ENCODE measurements at regions of chr5 and their contacts with region 1.

Region 1: GRCh38 chr5:138649316-138649720 is 74.1 kb upstream of the HSPA9 start:
- DNase-seq: no peak
- H3K4me3 Mint-ChIP-seq: no peak overlapping the region
- H3K27ac Mint-ChIP-seq: no peak overlapping the region
- H3K4me1 Mint-ChIP-seq: no peaks in the 10 kb centered on the region
- H3K27me3 Mint-ChIP-seq: no peaks in the 10 kb centered on the region
- CTCF ChIP-seq: no peak

Region 2: GRCh38 chr5:138594305-138595058 is 54.8 kb before region 1 on chr5:
- CTCF ChIA-PET with region 1: interaction called, 14 read pairs
- POLR2A ChIA-PET with region 1: no interaction called
- intact Hi-C with region 1: no loop called
- DNase-seq: no peak
- H3K4me3 Mint-ChIP-seq: no peak overlapping the region
- H3K27ac Mint-ChIP-seq: no peak overlapping the region
- H3K4me1 Mint-ChIP-seq: peaks cover 6% of the 10 kb centered on the region
- H3K27me3 Mint-ChIP-seq: no peaks in the 10 kb centered on the region
- CTCF ChIP-seq: peak; percentile 50

Measured in MCF 10A (cell line).